ENCODE measurements at regions of chr7 and their contacts with region 1.

Region 1: DNA sequence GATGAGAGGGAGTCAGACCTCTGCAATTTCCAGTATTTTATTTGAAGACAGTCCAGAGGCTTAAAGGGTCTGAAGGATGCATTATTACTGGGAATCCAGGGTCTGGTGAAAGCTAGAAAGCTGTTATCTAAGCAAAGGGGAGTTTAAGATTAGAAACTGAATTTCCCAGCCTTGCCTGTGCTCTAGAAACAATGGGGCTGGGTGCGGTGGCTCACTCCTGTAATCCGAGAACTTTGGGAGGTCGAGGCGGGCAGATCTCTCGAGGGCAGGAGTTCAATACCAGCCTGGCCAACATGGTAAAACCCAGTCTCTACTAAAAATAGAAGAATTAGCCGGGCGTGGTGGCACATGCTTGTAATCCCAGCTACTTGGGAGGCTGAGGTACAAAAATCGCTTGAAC is 71.5 kb upstream of the ANLN start:
- DNase-seq: no peak

Region 2: GRCh38 chr7:35985126-35985754 is 332.9 kb before region 1 on chr7:
- CTCF ChIA-PET with region 1: interaction called, 15 read pairs
- POLR2A ChIA-PET with region 1: no interaction called
- DNase-seq: peak; percentile 80

Region 3: DNA sequence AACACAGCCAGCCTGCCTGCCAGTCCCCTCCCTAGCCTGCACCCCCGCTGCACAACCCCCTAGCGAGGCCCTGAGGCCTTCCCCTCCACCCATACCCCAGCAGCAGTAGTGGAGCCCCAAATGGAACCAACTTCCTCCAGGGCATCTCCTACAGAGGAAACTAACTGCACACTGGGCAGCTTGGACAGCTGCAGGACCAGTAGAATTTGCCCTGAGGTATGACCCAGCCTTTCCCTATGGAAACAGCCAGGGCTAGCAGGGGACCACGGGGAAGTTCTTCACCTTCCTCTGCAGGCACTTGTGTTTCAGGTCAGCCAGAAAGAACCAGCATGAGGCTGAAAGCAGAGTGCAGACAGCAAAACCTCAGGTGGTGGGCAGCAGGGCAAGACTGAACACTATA is 170.8 kb before region 1 on chr7:
- CTCF ChIA-PET with region 1: no interaction called
- POLR2A ChIA-PET with region 1: no interaction called
- DNase-seq: no peak

Measured in HEK293T (cell line).